ENCODE measurements at regions of chr3 and their contacts with region 1.

Region 1: DNA sequence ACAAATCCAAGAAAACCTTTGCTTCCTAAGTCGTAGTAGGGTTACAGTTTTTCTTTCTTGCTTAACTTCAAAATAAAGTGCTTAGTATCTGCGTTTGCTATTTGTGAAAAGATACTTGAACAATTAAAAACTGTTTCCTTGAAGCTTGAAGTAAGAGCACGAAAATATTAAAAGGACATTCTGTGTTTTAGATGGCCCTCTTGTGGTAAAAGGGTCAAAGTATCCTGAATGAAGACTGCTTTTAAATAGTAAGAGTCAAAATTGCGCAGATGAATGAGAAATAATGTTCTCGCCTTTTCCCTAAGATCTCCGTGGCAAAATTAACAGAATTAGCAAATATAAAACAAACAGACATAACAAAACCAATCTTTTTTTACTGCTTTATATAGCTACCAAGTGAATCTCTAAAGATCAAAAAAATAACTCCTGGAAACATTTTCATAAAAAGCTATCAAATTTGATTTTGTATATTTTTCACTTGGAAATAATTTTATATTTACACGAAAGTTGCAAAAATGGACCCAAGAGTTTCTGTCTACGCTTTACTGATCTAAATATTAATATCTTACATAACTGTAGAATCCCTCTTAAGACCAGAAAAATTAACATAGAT is 175.4 kb downstream of the MBNL1 start:
- DNase-seq: peak in 4 of 5 donors; percentile 33 to 43 (median 38)
- H3K4me3 ChIP-seq: no peak overlapping the region
- H3K4me3 Mint-ChIP-seq: peak overlapping the region in 4 of 8 donors; percentile 1 to 47 (median 12)
- H3K27ac ChIP-seq: peak overlapping the region; percentile 6
- H3K27ac Mint-ChIP-seq: peak overlapping the region in 6 of 7 donors; percentile 17 to 92 (median 56)
- H3K4me1 ChIP-seq: peaks cover 89% of the 10 kb centered on the region
- H3K4me1 Mint-ChIP-seq: peaks cover 49 to 77% (median 60%) of the 10 kb centered on the region in 4 donors
- H3K27me3 ChIP-seq: no peaks in the 10 kb centered on the region
- H3K27me3 Mint-ChIP-seq: no peaks in the 10 kb centered on the region

Region 2: DNA sequence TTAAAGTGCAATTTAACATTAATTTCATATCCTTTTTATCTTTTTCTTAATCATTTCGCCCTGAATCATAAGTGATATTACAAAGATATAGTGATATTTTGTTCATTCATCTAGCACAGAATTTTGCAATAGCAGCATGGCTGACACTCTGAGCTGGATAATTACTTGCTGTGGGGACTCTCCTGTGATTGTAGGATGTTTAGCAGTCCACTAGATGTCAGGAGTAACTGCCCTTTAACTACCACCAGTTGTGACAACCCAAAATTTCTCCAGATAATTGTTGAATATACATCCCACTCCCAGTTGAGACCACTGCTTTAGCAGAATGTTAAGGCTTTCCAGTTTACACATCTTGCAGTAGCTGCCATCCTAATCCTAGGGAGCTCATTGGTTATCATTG is 372.2 kb before region 1 on chr3:
- CTCF ChIA-PET with region 1: interaction called, 11 read pairs
- POLR2A ChIA-PET with region 1: no interaction called
- intact Hi-C with region 1: loop called (anchors 1 kb)
- DNase-seq: peak in 4 of 5 donors; percentile 22 to 45 (median 36)
- H3K4me3 ChIP-seq: no peak overlapping the region
- H3K4me3 Mint-ChIP-seq: no peak overlapping the region
- H3K27ac ChIP-seq: no peak overlapping the region
- H3K27ac Mint-ChIP-seq: no peak overlapping the region
- H3K4me1 ChIP-seq: no peaks in the 10 kb centered on the region
- H3K4me1 Mint-ChIP-seq: peaks cover 0 to 3% (median 1%) of the 10 kb centered on the region in 4 donors
- H3K27me3 ChIP-seq: no peaks in the 10 kb centered on the region
- H3K27me3 Mint-ChIP-seq: no peaks in the 10 kb centered on the region

Region 3: DNA sequence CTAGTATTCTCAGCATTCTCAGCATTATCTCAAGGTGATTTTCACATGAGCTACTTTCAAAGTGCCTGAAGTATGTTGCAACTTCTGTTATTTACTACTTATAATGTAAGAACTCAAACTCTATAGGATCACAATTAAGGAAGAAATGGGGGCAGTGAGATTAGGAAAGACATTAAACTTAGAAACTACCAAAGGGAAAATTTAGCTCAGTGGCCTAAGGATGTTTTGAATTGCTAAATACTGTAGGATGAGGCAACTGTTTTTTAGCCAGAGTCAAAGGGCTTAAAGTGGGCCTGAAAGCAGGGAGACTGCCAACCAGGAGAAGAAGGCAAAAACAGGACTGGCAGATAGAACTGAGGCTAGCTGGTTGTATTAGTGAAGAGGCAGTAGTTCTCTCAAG is 230.9 kb before region 1 on chr3:
- CTCF ChIA-PET with region 1: no interaction called
- POLR2A ChIA-PET with region 1: no interaction called
- intact Hi-C with region 1: no loop called
- DNase-seq: no peak
- H3K4me3 ChIP-seq: no peak overlapping the region
- H3K4me3 Mint-ChIP-seq: peak overlapping the region in 2 of 8 donors; percentile 13 to 33
- H3K27ac ChIP-seq: no peak overlapping the region
- H3K27ac Mint-ChIP-seq: peak overlapping the region; percentile 1 to 80 (median 18)
- H3K4me1 ChIP-seq: peaks cover 50% of the 10 kb centered on the region
- H3K4me1 Mint-ChIP-seq: peaks cover 45 to 65% (median 56%) of the 10 kb centered on the region in 4 donors
- H3K27me3 ChIP-seq: no peaks in the 10 kb centered on the region
- H3K27me3 Mint-ChIP-seq: no peaks in the 10 kb centered on the region

Region 4: DNA sequence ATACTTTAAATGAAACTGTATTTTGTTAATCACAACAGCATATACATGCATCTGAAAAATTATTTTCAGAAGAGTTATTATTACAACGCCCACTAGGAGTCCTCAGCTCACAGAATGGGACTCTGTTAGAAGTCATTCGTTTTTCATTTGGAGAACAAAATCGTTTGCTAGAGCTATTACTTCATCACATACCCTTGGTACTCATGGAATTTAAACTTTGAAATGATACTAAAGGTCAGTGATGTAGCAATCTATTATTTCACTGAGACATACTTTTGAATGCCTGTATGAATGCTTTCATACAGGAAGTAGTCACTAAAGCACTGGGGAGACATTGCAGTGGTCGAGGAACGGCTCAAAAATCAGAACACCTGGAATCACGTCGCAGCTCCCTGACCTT is 22.6 kb after region 1 on chr3:
- CTCF ChIA-PET with region 1: interaction called, 12 read pairs
- POLR2A ChIA-PET with region 1: interaction called, 3 read pairs
- intact Hi-C with region 1: no loop called
- DNase-seq: peak in 3 of 5 donors; percentile 31 to 40 (median 36)
- H3K4me3 ChIP-seq: no peak overlapping the region
- H3K4me3 Mint-ChIP-seq: peak overlapping the region in 1 of 8 donors; percentile 54
- H3K27ac ChIP-seq: no peak overlapping the region
- H3K27ac Mint-ChIP-seq: peak overlapping the region in 5 of 7 donors; percentile 36 to 83 (median 61)
- H3K4me1 ChIP-seq: peaks cover 4% of the 10 kb centered on the region
- H3K4me1 Mint-ChIP-seq: peaks cover 5 to 15% (median 13%) of the 10 kb centered on the region in 4 donors
- H3K27me3 ChIP-seq: no peaks in the 10 kb centered on the region
- H3K27me3 Mint-ChIP-seq: no peaks in the 10 kb centered on the region

Region 5: DNA sequence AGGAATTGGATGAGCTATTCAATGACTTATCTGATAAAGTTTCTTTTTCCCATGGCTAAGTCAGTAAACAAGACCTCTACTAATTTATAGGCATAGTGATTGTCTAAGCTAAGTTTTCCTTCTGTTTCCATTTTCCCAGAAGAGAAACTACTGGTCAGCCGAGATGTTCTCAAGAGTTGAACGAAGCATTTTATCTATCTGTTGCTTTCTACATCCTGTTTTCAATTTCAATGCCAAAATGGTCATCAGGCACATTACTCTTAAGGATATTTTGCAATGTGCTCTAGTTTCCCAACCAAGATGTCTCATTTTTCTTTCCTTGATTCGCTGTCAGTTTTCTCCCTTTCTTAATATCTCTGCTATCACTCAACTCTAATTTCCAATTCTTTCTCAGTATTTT is 53.3 kb after region 1 on chr3:
- CTCF ChIA-PET with region 1: no interaction called
- POLR2A ChIA-PET with region 1: no interaction called
- intact Hi-C with region 1: no loop called
- DNase-seq: no peak
- H3K4me3 ChIP-seq: no peak overlapping the region
- H3K4me3 Mint-ChIP-seq: no peak overlapping the region
- H3K27ac ChIP-seq: no peak overlapping the region
- H3K27ac Mint-ChIP-seq: no peak overlapping the region
- H3K4me1 ChIP-seq: no peaks in the 10 kb centered on the region
- H3K4me1 Mint-ChIP-seq: peaks cover 2 to 8% (median 6%) of the 10 kb centered on the region in 4 donors
- H3K27me3 ChIP-seq: no peaks in the 10 kb centered on the region
- H3K27me3 Mint-ChIP-seq: peaks cover 0 to 2% of the 10 kb centered on the region in 2 donors